ENCODE measurements at regions of chr2 and their contacts with region 1.

Region 1: DNA sequence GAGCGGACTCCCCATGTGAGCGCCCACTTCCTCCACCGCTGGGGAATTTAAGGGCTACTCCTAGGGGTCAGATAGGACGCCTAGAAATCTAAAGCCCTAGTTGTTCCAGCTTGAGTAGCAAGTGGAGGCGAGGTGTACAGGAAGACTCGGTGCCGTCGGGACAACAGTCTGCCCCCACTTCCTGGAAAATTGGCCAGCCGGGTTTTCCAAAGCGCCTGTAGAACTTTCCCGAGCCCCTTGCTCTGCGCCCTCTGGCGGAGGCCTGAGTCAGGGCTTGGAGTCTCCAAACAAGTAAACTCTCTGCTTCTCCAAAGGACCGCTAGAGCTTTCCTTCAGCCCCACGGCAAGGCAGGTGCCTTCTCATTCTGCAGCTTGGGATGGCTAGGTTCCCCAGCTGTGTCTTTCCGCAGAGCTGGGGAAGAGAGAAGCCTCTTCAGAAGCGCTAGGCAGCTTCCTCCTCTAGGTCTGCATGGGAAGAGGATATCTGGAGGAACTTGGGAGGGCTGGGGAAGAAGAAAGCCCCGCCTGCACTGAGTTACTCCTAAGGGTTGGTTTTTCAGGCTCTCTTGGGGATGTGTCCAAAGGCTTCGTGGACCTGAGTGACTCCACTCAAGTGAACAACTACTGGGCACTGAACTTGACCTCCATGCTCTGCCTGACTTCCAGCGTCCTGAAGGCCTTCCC is 688 bp downstream of the SPR start:
- DNase-seq: peak in 8 of 9 donors; percentile 10 to 63 (median 28)
- ATAC-seq: peak; percentile 68
- H3K4me3 ChIP-seq: peak overlapping the region; percentile 43
- H3K4me3 Mint-ChIP-seq: peak overlapping the region; percentile 71 to 86 (median 80)
- H3K27ac ChIP-seq: no peak overlapping the region
- H3K27ac Mint-ChIP-seq: no peak overlapping the region
- H3K4me1 ChIP-seq: peaks cover 0 to 7% of the 10 kb centered on the region in 2 donors
- H3K4me1 Mint-ChIP-seq: peaks cover 0 to 15% (median 9%) of the 10 kb centered on the region in 7 donors
- H3K27me3 ChIP-seq: peaks cover 0 to 6% of the 10 kb centered on the region in 2 donors
- H3K27me3 Mint-ChIP-seq: peaks cover 35 to 72% (median 70%) of the 10 kb centered on the region in 5 donors

Region 2: GRCh38 chr2:72770879-72771461 is 116.9 kb before region 1 on chr2:
- CTCF ChIA-PET with region 1: interaction called, 3 read pairs
- POLR2A ChIA-PET with region 1: no interaction called
- intact Hi-C with region 1: loop called (anchors 1 kb)
- DNase-seq: peak in 7 of 9 donors; percentile 46 to 75 (median 74)
- ATAC-seq: peak; percentile 84
- H3K4me3 ChIP-seq: no peak overlapping the region
- H3K4me3 Mint-ChIP-seq: peak overlapping the region in 1 of 10 donors; percentile 4
- H3K27ac ChIP-seq: no peak overlapping the region
- H3K27ac Mint-ChIP-seq: peak overlapping the region in 1 of 9 donors; percentile 41
- H3K4me1 ChIP-seq: no peaks in the 10 kb centered on the region
- H3K4me1 Mint-ChIP-seq: no peaks in the 10 kb centered on the region
- H3K27me3 ChIP-seq: no peaks in the 10 kb centered on the region
- H3K27me3 Mint-ChIP-seq: no peaks in the 10 kb centered on the region

Region 3: GRCh38 chr2:72825241-72826155 is 62.4 kb before region 1 on chr2 and contains the start of gene EXOC6B:
- CTCF ChIA-PET with region 1: no interaction called
- POLR2A ChIA-PET with region 1: no interaction called
- intact Hi-C with region 1: loop called in 1 of 2 experiments (anchors 2 kb)
- DNase-seq: peak; percentile 78 to 87 (median 84)
- ATAC-seq: peak; percentile 96
- H3K4me3 ChIP-seq: peak within 1 kb of the TSS; percentile 70
- H3K4me3 Mint-ChIP-seq: peak within 1 kb of the TSS; percentile 88 to 99 (median 98)
- H3K27ac ChIP-seq: peak within 1 kb of the TSS; percentile 69
- H3K27ac Mint-ChIP-seq: peak within 1 kb of the TSS; percentile 70 to 96 (median 92)
- H3K4me1 ChIP-seq: peaks cover 14 to 19% of the 10 kb centered on the region in 2 donors
- H3K4me1 Mint-ChIP-seq: peaks cover 24 to 48% (median 45%) of the 10 kb centered on the region in 7 donors
- H3K27me3 ChIP-seq: no peaks in the 10 kb centered on the region
- H3K27me3 Mint-ChIP-seq: peaks cover 0 to 12% (median 5%) of the 10 kb centered on the region in 5 donors
- total RNA-seq, gene EXOC6B: 14.3 to 21.9 (median 18.0) TPM

Region 4: DNA sequence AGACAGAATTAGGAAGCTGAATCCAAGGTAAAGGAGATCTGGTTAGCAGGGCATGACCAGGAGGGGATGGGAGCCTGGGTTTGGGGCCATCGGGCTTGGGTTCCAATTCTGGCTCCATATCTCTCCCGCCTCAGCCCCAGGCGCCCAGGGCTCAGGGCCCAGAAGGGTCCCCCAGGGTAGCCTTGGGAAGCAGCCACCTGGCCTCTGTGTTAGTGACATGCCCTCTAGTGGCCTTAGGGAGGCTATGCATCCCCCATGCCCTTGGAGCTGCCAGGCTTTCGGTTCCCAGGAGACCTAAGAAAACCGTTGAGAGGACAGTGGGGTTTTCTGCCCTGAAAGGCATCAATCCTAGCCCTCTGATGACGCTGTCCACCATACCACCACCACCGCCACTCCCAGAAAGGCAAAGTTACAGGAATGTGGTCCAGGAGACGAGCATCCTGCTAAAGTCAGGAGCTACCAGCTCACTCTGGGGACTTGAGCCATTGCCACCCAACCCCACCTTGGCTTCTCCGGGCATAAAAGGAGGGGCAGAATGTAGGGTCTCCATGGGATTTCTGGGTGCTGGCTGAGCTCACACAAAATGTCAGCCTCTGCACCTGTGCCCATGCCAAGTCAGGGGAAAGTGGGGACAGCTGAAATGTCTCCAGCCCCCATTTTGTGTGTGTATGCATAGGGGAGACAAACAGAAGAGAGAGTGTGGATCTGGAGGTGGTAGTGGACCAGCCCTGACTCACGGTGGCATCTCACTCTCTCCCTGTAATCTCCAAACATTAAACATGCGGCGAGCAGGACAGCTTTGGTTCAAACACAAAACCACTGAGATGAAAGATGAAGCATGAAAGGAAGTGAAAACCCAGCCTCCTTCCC is 85.9 kb after region 1 on chr2:
- CTCF ChIA-PET with region 1: interaction called, 4 read pairs
- POLR2A ChIA-PET with region 1: no interaction called
- intact Hi-C with region 1: loop called in 1 of 2 experiments (anchors 1 kb)
- DNase-seq: peak in 6 of 9 donors; percentile 13 to 40 (median 20)
- ATAC-seq: peak; percentile 86
- H3K4me3 ChIP-seq: no peak overlapping the region
- H3K4me3 Mint-ChIP-seq: no peak overlapping the region
- H3K27ac ChIP-seq: no peak overlapping the region
- H3K27ac Mint-ChIP-seq: no peak overlapping the region
- H3K4me1 ChIP-seq: no peaks in the 10 kb centered on the region
- H3K4me1 Mint-ChIP-seq: no peaks in the 10 kb centered on the region
- H3K27me3 ChIP-seq: no peaks in the 10 kb centered on the region
- H3K27me3 Mint-ChIP-seq: peaks cover 0 to 7% (median 0%) of the 10 kb centered on the region in 5 donors

Region 5: DNA sequence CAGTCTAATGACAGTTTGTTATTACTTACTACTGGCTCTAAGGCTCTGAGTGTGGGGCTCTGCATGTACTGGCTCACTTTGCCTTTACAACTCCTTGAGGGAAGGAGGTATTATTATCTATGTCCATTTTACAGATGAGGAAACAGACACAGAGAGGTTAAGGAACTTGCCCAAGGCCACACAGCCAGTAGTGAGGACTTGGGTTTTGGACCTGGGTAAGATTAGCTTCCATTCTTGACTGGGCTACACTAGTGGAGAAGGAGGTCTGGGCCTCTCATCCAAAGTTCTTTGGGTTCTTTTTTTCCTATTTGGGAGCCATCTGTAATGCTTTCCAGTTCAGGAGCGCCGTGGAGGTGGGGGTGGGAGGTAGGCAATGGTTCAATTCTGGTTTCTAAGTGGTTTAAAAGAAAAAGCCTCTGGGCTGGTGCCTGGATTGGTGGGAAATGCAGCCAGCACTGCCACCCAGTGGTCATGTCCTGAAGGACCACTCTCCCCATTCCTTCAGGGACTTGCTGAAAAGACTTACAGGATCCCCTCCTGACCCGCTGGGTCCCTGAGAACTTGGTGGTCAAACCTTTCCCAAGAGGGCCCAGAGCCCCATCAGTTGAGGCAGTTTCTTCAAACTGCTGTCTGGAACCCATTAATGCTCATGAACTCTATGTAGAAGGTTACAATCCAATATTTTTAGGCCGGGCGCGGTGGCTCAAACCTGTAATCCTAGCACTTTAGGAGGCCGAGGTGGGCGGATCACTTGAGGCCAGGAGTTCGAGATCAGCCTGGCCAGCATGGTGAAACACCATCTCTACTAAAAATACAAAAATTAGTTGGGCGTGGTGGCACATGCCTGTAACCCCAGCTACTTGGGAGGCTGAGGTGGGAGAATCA is 275.8 kb after region 1 on chr2:
- CTCF ChIA-PET with region 1: no interaction called
- POLR2A ChIA-PET with region 1: no interaction called
- intact Hi-C with region 1: loop called (anchors 1 kb)
- DNase-seq: peak; percentile 31 to 66 (median 54)
- ATAC-seq: peak; percentile 88
- H3K4me3 ChIP-seq: no peak overlapping the region
- H3K4me3 Mint-ChIP-seq: no peak overlapping the region
- H3K27ac ChIP-seq: no peak overlapping the region
- H3K27ac Mint-ChIP-seq: no peak overlapping the region
- H3K4me1 ChIP-seq: no peaks in the 10 kb centered on the region
- H3K4me1 Mint-ChIP-seq: peaks cover 0 to 1% (median 0%) of the 10 kb centered on the region in 7 donors
- H3K27me3 ChIP-seq: no peaks in the 10 kb centered on the region
- H3K27me3 Mint-ChIP-seq: peaks cover 0 to 16% (median 11%) of the 10 kb centered on the region in 5 donors

Region 6: DNA sequence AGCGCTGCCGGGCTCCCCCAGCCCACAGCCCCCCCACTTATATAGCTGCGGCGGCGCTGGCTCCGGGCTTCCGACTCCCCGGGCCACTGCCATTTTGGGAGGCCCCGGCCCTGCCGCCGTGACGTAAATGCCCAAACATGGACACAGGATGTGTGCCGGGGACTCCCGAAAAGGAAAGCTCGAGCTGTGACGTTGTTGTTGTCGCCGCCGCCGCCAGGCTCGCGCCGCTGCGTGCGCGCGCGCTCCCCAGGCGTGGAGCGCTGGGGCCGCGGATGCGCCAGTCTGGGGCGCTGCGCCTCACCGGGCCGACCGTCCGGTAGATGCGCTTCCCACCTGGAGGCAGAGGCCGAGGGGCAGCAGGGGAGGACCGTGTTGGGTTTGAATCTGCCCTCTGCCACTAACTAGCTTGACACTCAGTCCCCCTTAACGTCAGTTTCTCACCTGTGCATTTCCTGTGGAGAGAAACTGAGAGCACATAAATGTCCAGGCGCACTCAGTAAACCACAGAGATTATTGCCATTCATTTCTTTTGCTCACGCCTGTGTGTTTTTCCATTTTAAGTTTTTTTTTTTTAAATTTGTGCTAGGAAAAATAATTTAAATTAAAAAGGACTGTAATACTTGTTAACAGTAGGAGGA is 405.8 kb after region 1 on chr2 and contains the start of gene EGR4:
- CTCF ChIA-PET with region 1: no interaction called
- POLR2A ChIA-PET with region 1: no interaction called
- intact Hi-C with region 1: loop called in 1 of 2 experiments (anchors 10 kb)
- DNase-seq: peak; percentile 70 to 96 (median 88)
- ATAC-seq: peak; percentile 94
- H3K4me3 ChIP-seq: peak within 1 kb of the TSS; percentile 72
- H3K4me3 Mint-ChIP-seq: peak within 1 kb of the TSS; percentile 59 to 82 (median 72)
- H3K27ac ChIP-seq: no peak within 1 kb of the TSS
- H3K27ac Mint-ChIP-seq: peak within 1 kb of the TSS in 4 of 9 donors; percentile 9 to 81 (median 30)
- H3K4me1 ChIP-seq: peaks cover 17 to 18% of the 10 kb centered on the region in 2 donors
- H3K4me1 Mint-ChIP-seq: peaks cover 7 to 25% (median 14%) of the 10 kb centered on the region in 7 donors
- H3K27me3 ChIP-seq: peaks cover 11 to 25% of the 10 kb centered on the region in 2 donors
- H3K27me3 Mint-ChIP-seq: peaks cover 48 to 83% (median 66%) of the 10 kb centered on the region in 5 donors
- total RNA-seq, gene EGR4: 0.15 to 0.16 (median 0.15) TPM in 3 of 5 experiments, not detected in the others